ENCODE measurements at regions of chr15 and their contacts with region 1.

Region 1: GRCh38 chr15:82398785-82399184 is 30.8 kb upstream of the GOLGA6L9 start:
- DNase-seq: no peak
- H3K4me3 ChIP-seq: no peak overlapping the region
- H3K27ac ChIP-seq: no peak overlapping the region
- H3K4me1 ChIP-seq: no peaks in the 10 kb centered on the region
- H3K27me3 ChIP-seq: no peaks in the 10 kb centered on the region
- CTCF ChIP-seq: no peak

Region 2: DNA sequence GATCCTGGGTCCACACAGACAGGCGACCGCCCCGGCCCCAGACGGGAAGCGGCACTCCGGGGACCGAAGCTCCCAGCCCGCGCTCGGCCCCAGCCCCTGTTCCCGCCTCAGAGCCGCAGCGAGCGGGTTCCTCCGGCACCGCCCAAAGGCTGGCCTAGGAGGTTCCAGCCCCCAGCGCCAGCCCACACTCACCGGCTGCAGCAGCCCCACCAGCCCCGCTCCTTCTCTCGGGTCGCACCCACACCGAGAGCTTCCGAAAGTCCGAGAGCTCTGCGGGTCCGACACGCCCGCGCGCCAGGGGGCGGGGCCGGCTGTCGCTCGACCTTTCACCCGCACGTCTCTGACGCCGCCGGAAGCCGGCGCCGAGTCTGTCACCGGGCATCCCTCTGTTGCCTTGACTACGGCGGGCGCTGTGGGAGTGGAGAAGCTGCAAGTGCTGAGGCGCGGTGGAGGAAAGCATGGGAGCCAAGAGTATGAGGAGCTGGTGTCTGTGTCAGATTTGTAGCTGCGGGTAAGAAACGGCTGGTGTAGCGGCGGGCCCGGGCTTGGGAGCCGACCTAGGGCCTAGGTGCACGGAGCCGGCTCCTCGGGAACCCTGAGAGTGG is 136.3 kb before region 1 on chr15 and contains the starts of genes EFL1 and SAXO2:
- CTCF ChIA-PET with region 1: no interaction called
- dilution Hi-C with region 1: no loop called
- in situ Hi-C with region 1: loop called in 1 of 2 experiments (anchors 25 kb)
- intact Hi-C with region 1: no loop called
- DNase-seq: peak; percentile 88
- H3K4me3 ChIP-seq: peak within 1 kb of the TSS; percentile 70 to 95 (median 75)
- H3K27ac ChIP-seq: peak within 1 kb of the TSS; percentile 93
- H3K4me1 ChIP-seq: peaks cover 23% of the 10 kb centered on the region
- H3K27me3 ChIP-seq: no peaks in the 10 kb centered on the region
- CTCF ChIP-seq: no peak
- total RNA-seq, gene EFL1: 30.0 to 39.2 TPM
- total RNA-seq, gene SAXO2: 3.3 to 4.2 TPM

Region 3: DNA sequence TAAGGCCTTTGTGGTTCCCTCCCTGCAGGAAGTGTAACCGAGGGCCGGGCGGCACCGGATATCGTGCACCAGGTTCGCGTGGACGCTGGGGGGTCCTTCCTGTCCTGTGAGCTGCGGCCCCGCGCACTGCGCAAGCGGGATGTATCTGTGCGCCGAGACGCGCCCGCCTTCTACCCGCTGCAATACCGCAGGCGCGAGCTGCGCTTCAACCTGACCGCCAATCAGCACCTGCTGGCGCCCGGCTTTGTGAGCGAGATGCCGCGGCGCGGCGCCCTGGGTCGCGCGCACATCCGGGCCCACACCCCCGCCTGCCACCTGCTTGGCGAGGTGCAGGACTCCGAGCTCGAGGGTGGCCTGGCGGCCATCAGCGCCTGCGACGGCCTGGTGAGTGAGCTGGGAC is 100.3 kb before region 1 on chr15:
- CTCF ChIA-PET with region 1: no interaction called
- dilution Hi-C with region 1: loop called (anchors 25 kb)
- in situ Hi-C with region 1: no loop called
- intact Hi-C with region 1: no loop called
- DNase-seq: no peak
- H3K4me3 ChIP-seq: no peak overlapping the region
- H3K27ac ChIP-seq: no peak overlapping the region
- H3K4me1 ChIP-seq: peaks cover 4% of the 10 kb centered on the region
- H3K27me3 ChIP-seq: no peaks in the 10 kb centered on the region
- CTCF ChIP-seq: no peak

Region 4: GRCh38 chr15:82540055-82540983 is 141.5 kb after region 1 on chr15 and contains the start of gene RPS17:
- CTCF ChIA-PET with region 1: no interaction called
- dilution Hi-C with region 1: loop called (anchors 25 kb)
- in situ Hi-C with region 1: no loop called
- intact Hi-C with region 1: no loop called
- DNase-seq: peak; percentile 96
- H3K4me3 ChIP-seq: peak within 1 kb of the TSS; percentile 83 to 92 (median 92)
- H3K27ac ChIP-seq: peak within 1 kb of the TSS; percentile 73
- H3K4me1 ChIP-seq: peaks cover 21% of the 10 kb centered on the region
- H3K27me3 ChIP-seq: no peaks in the 10 kb centered on the region
- CTCF ChIP-seq: peak; percentile 78 to 98
- total RNA-seq, gene RPS17: 1,069 to 1,616 TPM

Region 5: GRCh38 chr15:82597815-82598214 is 199.0 kb after region 1 on chr15:
- CTCF ChIA-PET with region 1: no interaction called
- dilution Hi-C with region 1: no loop called
- in situ Hi-C with region 1: no loop called
- intact Hi-C with region 1: no loop called
- DNase-seq: no peak
- H3K4me3 ChIP-seq: no peak overlapping the region
- H3K27ac ChIP-seq: no peak overlapping the region
- H3K4me1 ChIP-seq: no peaks in the 10 kb centered on the region
- H3K27me3 ChIP-seq: no peaks in the 10 kb centered on the region
- CTCF ChIP-seq: no peak

Region 6: GRCh38 chr15:82647045-82647834 is 248.5 kb after region 1 on chr15 and contains the start of gene CPEB1:
- CTCF ChIA-PET with region 1: no interaction called
- dilution Hi-C with region 1: no loop called
- in situ Hi-C with region 1: no loop called
- intact Hi-C with region 1: no loop called
- DNase-seq: peak; percentile 6
- H3K4me3 ChIP-seq: peak within 1 kb of the TSS; percentile 40 to 43 (median 41)
- H3K27ac ChIP-seq: no peak within 1 kb of the TSS
- H3K4me1 ChIP-seq: peaks cover 12% of the 10 kb centered on the region
- H3K27me3 ChIP-seq: peaks cover 29% of the 10 kb centered on the region
- CTCF ChIP-seq: peak in 1 of 2 donors; percentile 20
- total RNA-seq, gene CPEB1: 0.38 to 8.7 TPM

Measured in mammary epithelial cell (primary cell).